CD4-positive, alpha-beta T cell (primary cell): ENCODE measurements at regions of chrX and their contacts with region 1.

Region 1: DNA sequence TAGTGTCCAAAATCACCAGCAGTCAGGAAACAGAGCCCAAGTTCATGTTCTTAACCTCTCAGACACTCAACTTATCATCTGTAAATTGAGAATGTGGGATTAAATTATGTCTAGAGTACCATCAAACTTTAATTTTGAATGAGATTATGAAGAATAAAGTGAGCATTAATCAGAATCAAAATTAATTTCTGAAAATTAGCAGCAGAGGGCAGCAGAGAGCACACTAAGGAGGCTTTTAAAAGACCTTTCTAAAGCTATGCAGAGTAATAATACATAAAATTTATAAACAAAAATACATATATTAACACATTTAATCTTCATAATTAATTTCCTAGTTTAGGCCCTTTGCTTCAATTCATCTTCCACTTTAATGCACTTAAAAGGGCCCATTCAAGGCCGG is 7.1 kb downstream of the TASL start:
- DNase-seq: peak in 4 of 14 experiments; percentile 21 to 62 (median 42)
- ATAC-seq: no peak
- H3K4me3 ChIP-seq: no peak overlapping the region
- H3K4me3 Mint-ChIP-seq: no peak overlapping the region
- H3K27ac ChIP-seq: no peak overlapping the region
- H3K27ac Mint-ChIP-seq: no peak overlapping the region
- H3K4me1 ChIP-seq: no peaks in the 10 kb centered on the region
- H3K4me1 Mint-ChIP-seq: peaks cover 20% of the 10 kb centered on the region
- H3K27me3 ChIP-seq: no peaks in the 10 kb centered on the region
- H3K27me3 Mint-ChIP-seq: no peaks in the 10 kb centered on the region
- CTCF ChIP-seq: peak; percentile 55

Region 2: GRCh38 chrX:30607155-30607554 is 36.6 kb after region 1 on chrX:
- CTCF ChIA-PET with region 1: no interaction called
- POLR2A ChIA-PET with region 1: no interaction called
- intact Hi-C with region 1: no loop called
- DNase-seq: no peak
- ATAC-seq: no peak
- H3K4me3 ChIP-seq: no peak overlapping the region
- H3K4me3 Mint-ChIP-seq: no peak overlapping the region
- H3K27ac ChIP-seq: no peak overlapping the region
- H3K27ac Mint-ChIP-seq: no peak overlapping the region
- H3K4me1 ChIP-seq: no peaks in the 10 kb centered on the region
- H3K4me1 Mint-ChIP-seq: no peaks in the 10 kb centered on the region
- H3K27me3 ChIP-seq: no peaks in the 10 kb centered on the region
- H3K27me3 Mint-ChIP-seq: no peaks in the 10 kb centered on the region
- CTCF ChIP-seq: no peak

Region 3: GRCh38 chrX:30713061-30713525 is 142.6 kb after region 1 on chrX:
- CTCF ChIA-PET with region 1: no interaction called
- POLR2A ChIA-PET with region 1: no interaction called
- intact Hi-C with region 1: loop called in 1 of 2 experiments (anchors 2 kb)
- DNase-seq: peak; percentile 5 to 63 (median 22)
- ATAC-seq: peak; percentile 49
- H3K4me3 ChIP-seq: no peak overlapping the region
- H3K4me3 Mint-ChIP-seq: no peak overlapping the region
- H3K27ac ChIP-seq: no peak overlapping the region
- H3K27ac Mint-ChIP-seq: peak overlapping the region; percentile 28
- H3K4me1 ChIP-seq: no peaks in the 10 kb centered on the region
- H3K4me1 Mint-ChIP-seq: peaks cover 6% of the 10 kb centered on the region
- H3K27me3 ChIP-seq: no peaks in the 10 kb centered on the region
- H3K27me3 Mint-ChIP-seq: no peaks in the 10 kb centered on the region
- CTCF ChIP-seq: peak; percentile 37

Region 4: GRCh38 chrX:30851449-30851848 is 280.9 kb after region 1 on chrX:
- CTCF ChIA-PET with region 1: no interaction called
- POLR2A ChIA-PET with region 1: no interaction called
- intact Hi-C with region 1: no loop called
- DNase-seq: no peak
- ATAC-seq: no peak
- H3K4me3 ChIP-seq: no peak overlapping the region
- H3K4me3 Mint-ChIP-seq: no peak overlapping the region
- H3K27ac ChIP-seq: no peak overlapping the region
- H3K27ac Mint-ChIP-seq: no peak overlapping the region
- H3K4me1 ChIP-seq: no peaks in the 10 kb centered on the region
- H3K4me1 Mint-ChIP-seq: no peaks in the 10 kb centered on the region
- H3K27me3 ChIP-seq: no peaks in the 10 kb centered on the region
- H3K27me3 Mint-ChIP-seq: no peaks in the 10 kb centered on the region
- CTCF ChIP-seq: no peak